Activated CD8-positive, alpha-beta T cell treated with anti-CD3 and anti-CD28 coated beads for 36 hours (primary cell): ENCODE measurements at regions of chr17 and their contacts with region 1.

Region 1: DNA sequence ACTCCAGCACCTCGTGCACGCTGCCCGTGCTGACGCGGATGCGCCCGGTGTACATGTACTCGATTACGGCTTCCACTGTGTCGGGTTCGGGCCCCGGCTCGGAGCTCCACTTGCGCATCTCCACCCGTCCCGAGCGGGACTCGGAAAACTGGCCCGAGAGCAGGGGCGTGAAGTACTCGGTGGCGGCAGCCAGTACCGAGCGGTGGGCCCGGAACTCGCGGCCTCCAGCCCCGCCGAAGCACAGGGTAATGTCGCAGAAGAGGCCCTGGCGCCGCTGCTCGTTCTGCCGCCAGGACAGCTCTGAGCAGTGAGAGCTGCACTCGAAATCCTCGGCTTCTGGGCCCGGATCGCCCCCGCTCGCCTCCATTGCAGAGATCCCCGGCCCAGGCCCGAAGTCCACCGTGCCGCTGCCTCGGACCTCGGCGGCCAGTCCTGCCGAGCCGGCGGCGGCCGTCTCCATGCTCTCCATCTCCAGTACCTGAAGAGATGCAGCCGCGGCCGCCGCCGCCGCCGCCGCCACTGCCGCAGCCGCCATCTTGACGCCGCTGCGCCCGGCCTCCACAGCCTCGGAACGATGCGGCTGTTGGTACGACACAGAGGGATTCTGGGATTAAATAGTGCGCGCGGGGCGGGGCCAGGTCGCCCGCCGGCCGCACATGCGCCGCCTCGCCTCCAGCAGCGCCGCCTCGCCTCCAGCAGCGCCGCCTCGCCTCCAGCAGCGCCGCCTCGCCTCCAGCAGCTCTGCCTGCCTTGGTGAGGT is at the start of gene KLHL11:
- DNase-seq: peak; percentile 93
- ATAC-seq: peak; percentile 89
- H3K4me3 Mint-ChIP-seq: no peak within 1 kb of the TSS
- H3K27ac Mint-ChIP-seq: peak within 1 kb of the TSS; percentile 83
- H3K4me1 Mint-ChIP-seq: peaks cover 41% of the 10 kb centered on the region
- H3K27me3 Mint-ChIP-seq: no peaks in the 10 kb centered on the region
- CTCF ChIP-seq: no peak
- total RNA-seq, gene KLHL11: 19.2 to 19.6 TPM

Region 2: GRCh38 chr17:41688699-41689496 is 176.1 kb before region 1 on chr17 and contains the start of gene EIF1:
- CTCF ChIA-PET with region 1: no interaction called
- POLR2A ChIA-PET with region 1: interaction called, 14 read pairs
- intact Hi-C with region 1: no loop called
- DNase-seq: peak; percentile 100
- ATAC-seq: peak; percentile 77
- H3K4me3 Mint-ChIP-seq: peak within 1 kb of the TSS; percentile 97
- H3K27ac Mint-ChIP-seq: peak within 1 kb of the TSS; percentile 93
- H3K4me1 Mint-ChIP-seq: peaks cover 26% of the 10 kb centered on the region
- H3K27me3 Mint-ChIP-seq: no peaks in the 10 kb centered on the region
- CTCF ChIP-seq: no peak
- total RNA-seq, gene EIF1: 924 to 930 TPM

Region 3: DNA sequence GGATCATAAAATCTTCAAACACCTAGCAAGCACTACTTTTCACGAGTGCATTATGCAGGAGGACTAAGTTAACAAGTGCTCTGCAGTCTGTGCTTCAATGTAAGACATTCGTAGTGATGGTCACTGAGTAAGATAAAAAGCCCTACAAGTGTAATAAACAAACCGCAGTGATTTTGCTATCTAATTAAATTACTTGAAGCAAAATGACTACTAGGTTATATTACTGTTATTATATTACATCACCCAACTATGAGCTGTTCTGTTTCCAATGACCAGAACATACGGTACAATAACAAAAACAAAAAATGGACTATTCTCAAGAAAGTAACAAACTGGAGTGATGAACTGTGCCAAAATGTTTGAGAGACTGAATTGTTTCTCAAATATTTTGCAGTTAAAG is 16.2 kb before region 1 on chr17:
- CTCF ChIA-PET with region 1: interaction called, 3 read pairs
- POLR2A ChIA-PET with region 1: interaction called, 11 read pairs
- intact Hi-C with region 1: no loop called
- DNase-seq: no peak
- ATAC-seq: no peak
- H3K4me3 Mint-ChIP-seq: no peak overlapping the region
- H3K27ac Mint-ChIP-seq: no peak overlapping the region
- H3K4me1 Mint-ChIP-seq: peaks cover 24% of the 10 kb centered on the region
- H3K27me3 Mint-ChIP-seq: no peaks in the 10 kb centered on the region
- CTCF ChIP-seq: no peak

Region 4: GRCh38 chr17:41918314-41919164 is 53.5 kb after region 1 on chr17 and contains the start of gene ACLY:
- CTCF ChIA-PET with region 1: interaction called, 6 read pairs
- POLR2A ChIA-PET with region 1: interaction called, 14 read pairs
- intact Hi-C with region 1: no loop called
- DNase-seq: peak; percentile 97
- ATAC-seq: peak; percentile 99
- H3K4me3 Mint-ChIP-seq: peak within 1 kb of the TSS; percentile 95
- H3K27ac Mint-ChIP-seq: peak within 1 kb of the TSS; percentile 93
- H3K4me1 Mint-ChIP-seq: peaks cover 34% of the 10 kb centered on the region
- H3K27me3 Mint-ChIP-seq: no peaks in the 10 kb centered on the region
- CTCF ChIP-seq: no peak
- total RNA-seq, gene ACLY: 185 to 186 TPM